ENCODE measurements at regions of chr2 and their contacts with region 1.

Region 1: GRCh38 chr2:88590998-88591613 is 36.2 kb downstream of the EIF2AK3 start:
- DNase-seq: peak; percentile 48
- H3K4me3 ChIP-seq: no peak overlapping the region
- H3K27ac ChIP-seq: no peak overlapping the region
- H3K27me3 ChIP-seq: no peaks in the 10 kb centered on the region
- CTCF ChIP-seq: peak; percentile 78

Region 2: DNA sequence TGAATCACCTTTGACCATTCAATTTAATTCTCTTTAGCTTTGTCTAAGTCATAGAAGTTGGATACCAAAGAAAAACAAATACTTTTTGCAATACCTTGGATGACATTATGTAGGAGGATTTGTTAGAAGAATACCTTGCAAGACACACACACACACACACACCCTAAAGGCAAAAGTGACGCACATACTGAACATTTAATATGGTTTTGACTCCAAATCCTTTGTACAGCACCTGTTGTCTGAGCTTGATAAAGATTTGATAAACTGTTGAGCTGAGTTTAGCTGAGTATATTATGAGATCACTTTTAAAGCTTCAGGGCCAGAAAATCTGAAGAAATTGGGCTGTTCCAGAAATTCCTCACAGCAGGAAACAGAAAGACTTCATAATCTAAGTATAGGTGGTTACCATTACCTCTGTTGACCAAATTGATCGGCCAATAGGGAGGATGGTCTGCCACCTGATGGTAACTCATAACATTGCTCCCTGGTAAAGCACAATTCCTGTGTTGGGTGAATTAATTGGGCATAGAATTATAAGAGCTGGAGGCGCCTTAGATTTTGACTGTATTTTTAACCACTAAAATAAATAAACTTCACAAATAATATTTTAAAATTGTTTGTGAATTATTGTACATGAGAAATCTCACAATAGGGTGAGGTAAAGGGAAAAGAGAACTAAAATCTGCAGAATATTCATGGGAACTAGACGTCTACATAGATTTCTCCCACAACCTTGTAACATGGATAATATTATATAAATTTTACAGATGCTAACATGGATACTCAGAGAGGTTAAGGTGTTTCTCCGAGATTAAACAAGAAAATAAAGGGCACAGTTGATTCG is 78.5 kb after region 1 on chr2:
- in situ Hi-C with region 1: loop called (anchors 10 kb)
- DNase-seq: peak; percentile 40
- H3K4me3 ChIP-seq: no peak overlapping the region
- H3K27ac ChIP-seq: no peak overlapping the region
- H3K27me3 ChIP-seq: peaks cover 2% of the 10 kb centered on the region
- CTCF ChIP-seq: peak; percentile 77